Thyroid gland (tissue), 4 donors: ENCODE measurements at regions of chr17 and their contacts with region 1.

Region 1: DNA sequence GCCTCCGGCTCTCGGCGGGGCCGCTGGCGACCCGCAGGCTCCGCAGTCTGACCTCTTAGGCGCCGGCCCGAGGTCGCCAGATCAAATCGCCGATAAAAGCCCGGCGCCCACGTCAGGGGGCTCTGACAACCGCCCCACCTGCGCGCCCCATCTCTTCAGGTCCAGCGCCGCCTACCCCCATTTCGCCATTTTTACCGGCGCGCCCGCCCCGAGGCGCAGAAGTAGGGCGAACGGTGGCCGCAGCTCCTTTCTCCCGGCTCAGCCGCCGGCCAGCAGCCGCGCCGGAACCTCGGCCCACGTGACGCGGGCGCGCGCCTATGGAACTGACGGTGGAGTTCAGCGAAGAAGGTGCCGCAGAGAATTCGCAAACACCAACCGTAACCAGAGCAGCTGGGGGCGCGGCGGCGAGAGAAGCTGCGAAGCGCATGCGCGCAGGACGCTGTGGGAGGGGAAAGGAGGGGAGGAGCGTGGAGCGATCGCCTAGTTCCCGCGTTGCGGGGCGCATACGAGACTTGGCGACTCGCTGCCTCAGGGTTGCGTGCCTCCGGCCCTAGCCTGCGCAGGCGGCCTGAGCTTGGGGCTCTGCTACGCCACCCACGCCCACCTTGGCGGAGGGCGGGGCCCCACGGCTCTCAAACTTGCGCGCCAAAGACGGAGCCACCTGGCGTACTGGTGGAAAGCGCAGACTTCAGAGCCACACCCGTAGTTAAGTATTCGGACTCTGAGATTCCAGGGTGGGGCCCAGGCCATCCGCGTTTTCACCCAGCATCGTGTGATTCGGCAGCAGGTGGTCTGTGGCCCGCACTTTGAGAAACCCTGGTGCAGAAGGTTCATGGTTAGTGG is at the start of gene TRIM37:
- DNase-seq: peak; percentile 98
- H3K4me3 ChIP-seq: peak within 1 kb of the TSS; percentile 58 to 84 (median 80)
- H3K27ac ChIP-seq: peak within 1 kb of the TSS; percentile 30 to 85 (median 79)
- H3K4me1 ChIP-seq: peaks cover 10 to 16% of the 10 kb centered on the region in 2 donors
- H3K27me3 ChIP-seq: no peaks in the 10 kb centered on the region
- CTCF ChIP-seq: peak in 3 of 6 experiments; percentile 2 to 23 (median 12)
- POLR2A ChIP-seq: peak in 1 of 2 donors; percentile 80
- total RNA-seq, gene TRIM37: 30.2 to 46.8 (median 34.2) TPM

Region 2: GRCh38 chr17:59038734-59039133 is 68.0 kb before region 1 on chr17:
- intact Hi-C with region 1: no loop called
- DNase-seq: no peak
- H3K4me3 ChIP-seq: no peak overlapping the region
- H3K27ac ChIP-seq: no peak overlapping the region
- H3K4me1 ChIP-seq: no peaks in the 10 kb centered on the region
- H3K27me3 ChIP-seq: no peaks in the 10 kb centered on the region
- CTCF ChIP-seq: no peak
- POLR2A ChIP-seq: no peak

Region 3: GRCh38 chr17:59155439-59156182 is 48.9 kb after region 1 on chr17 and contains the start of gene PRR11:
- intact Hi-C with region 1: loop called (anchors 10 kb)
- DNase-seq: peak; percentile 96
- H3K4me3 ChIP-seq: peak within 1 kb of the TSS; percentile 24 to 52 (median 43)
- H3K27ac ChIP-seq: peak within 1 kb of the TSS; percentile 2 to 81 (median 80)
- H3K4me1 ChIP-seq: peaks cover 19 to 22% of the 10 kb centered on the region in 2 donors
- H3K27me3 ChIP-seq: no peaks in the 10 kb centered on the region
- CTCF ChIP-seq: no peak
- POLR2A ChIP-seq: no peak
- total RNA-seq, gene PRR11: 0.89 to 2.2 (median 1.3) TPM

Region 4: GRCh38 chr17:59199398-59199797 is 92.7 kb after region 1 on chr17:
- intact Hi-C with region 1: no loop called
- DNase-seq: no peak
- H3K4me3 ChIP-seq: no peak overlapping the region
- H3K27ac ChIP-seq: no peak overlapping the region
- H3K4me1 ChIP-seq: no peaks in the 10 kb centered on the region
- H3K27me3 ChIP-seq: no peaks in the 10 kb centered on the region
- CTCF ChIP-seq: no peak
- POLR2A ChIP-seq: no peak

Region 5: DNA sequence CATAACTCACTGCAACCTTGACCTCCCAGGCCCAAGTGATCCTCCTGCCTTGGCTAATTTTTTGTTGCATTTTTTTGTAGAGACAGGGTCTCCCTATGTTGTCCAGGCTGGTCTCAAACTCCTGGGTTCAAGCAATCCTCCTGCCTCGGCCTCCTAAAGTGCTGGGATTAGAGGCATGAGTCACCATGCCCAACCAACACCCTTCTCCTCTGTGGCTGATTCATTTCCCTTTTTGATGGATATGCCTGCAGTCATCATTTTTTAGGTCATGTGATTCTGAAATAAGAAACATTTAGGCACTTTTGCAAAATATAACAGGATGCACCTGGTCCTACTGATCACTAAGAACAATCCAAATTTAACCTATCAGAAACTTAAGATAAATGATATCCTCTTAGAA is 180.8 kb after region 1 on chr17:
- intact Hi-C with region 1: no loop called
- DNase-seq: no peak
- H3K4me3 ChIP-seq: no peak overlapping the region
- H3K27ac ChIP-seq: no peak overlapping the region
- H3K4me1 ChIP-seq: peaks cover 0 to 8% of the 10 kb centered on the region in 2 donors
- H3K27me3 ChIP-seq: no peaks in the 10 kb centered on the region
- CTCF ChIP-seq: no peak
- POLR2A ChIP-seq: no peak